Naive thymus-derived CD4-positive, alpha-beta T cell (primary cell): ENCODE measurements at regions of chr14 and their contacts with region 1.

Region 1: DNA sequence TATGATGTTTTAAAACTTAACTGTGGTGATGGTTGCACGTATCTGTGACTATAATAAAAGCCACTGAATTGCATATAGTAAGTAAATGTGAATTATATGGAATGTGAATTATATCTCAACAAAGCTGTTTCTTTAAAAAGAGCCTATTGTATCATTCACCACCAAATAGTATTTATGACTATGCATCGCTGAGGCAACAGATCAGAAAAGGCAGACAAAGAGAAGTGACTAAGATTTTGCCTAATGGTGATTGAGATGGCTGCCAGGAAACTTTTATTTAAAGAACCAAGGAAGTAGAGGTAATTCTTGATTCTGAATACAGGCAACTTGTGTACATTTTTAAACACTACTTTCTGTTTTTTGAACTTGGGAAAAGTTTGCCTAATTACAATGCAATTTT is 31.7 kb downstream of the DHRS7 start:
- DNase-seq: no peak
- ATAC-seq: no peak
- H3K4me3 ChIP-seq: no peak overlapping the region
- H3K4me3 Mint-ChIP-seq: no peak overlapping the region
- H3K27ac ChIP-seq: no peak overlapping the region
- H3K27ac Mint-ChIP-seq: no peak overlapping the region
- H3K4me1 ChIP-seq: no peaks in the 10 kb centered on the region
- H3K4me1 Mint-ChIP-seq: peaks cover 0 to 13% (median 0%) of the 10 kb centered on the region in 7 donors
- H3K27me3 ChIP-seq: no peaks in the 10 kb centered on the region
- H3K27me3 Mint-ChIP-seq: no peaks in the 10 kb centered on the region

Region 2: GRCh38 chr14:59849411-59850130 is 283.9 kb before region 1 on chr14:
- CTCF ChIA-PET with region 1: no interaction called
- POLR2A ChIA-PET with region 1: no interaction called
- intact Hi-C with region 1: no loop called
- DNase-seq: no peak
- ATAC-seq: peak; percentile 52
- H3K4me3 ChIP-seq: no peak overlapping the region
- H3K4me3 Mint-ChIP-seq: no peak overlapping the region
- H3K27ac ChIP-seq: no peak overlapping the region
- H3K27ac Mint-ChIP-seq: no peak overlapping the region
- H3K4me1 ChIP-seq: no peaks in the 10 kb centered on the region
- H3K4me1 Mint-ChIP-seq: peaks cover 0 to 5% (median 2%) of the 10 kb centered on the region in 7 donors
- H3K27me3 ChIP-seq: no peaks in the 10 kb centered on the region
- H3K27me3 Mint-ChIP-seq: peaks cover under 1 to 14% (median 7%) of the 10 kb centered on the region in 5 donors

Region 3: GRCh38 chr14:60116181-60116580 is 17.3 kb before region 1 on chr14:
- CTCF ChIA-PET with region 1: no interaction called
- POLR2A ChIA-PET with region 1: no interaction called
- intact Hi-C with region 1: no loop called
- DNase-seq: no peak
- ATAC-seq: no peak
- H3K4me3 ChIP-seq: no peak overlapping the region
- H3K4me3 Mint-ChIP-seq: no peak overlapping the region
- H3K27ac ChIP-seq: no peak overlapping the region
- H3K27ac Mint-ChIP-seq: no peak overlapping the region
- H3K4me1 ChIP-seq: no peaks in the 10 kb centered on the region
- H3K4me1 Mint-ChIP-seq: peaks cover 0 to 8% (median 3%) of the 10 kb centered on the region in 7 donors
- H3K27me3 ChIP-seq: no peaks in the 10 kb centered on the region
- H3K27me3 Mint-ChIP-seq: no peaks in the 10 kb centered on the region

Region 4: DNA sequence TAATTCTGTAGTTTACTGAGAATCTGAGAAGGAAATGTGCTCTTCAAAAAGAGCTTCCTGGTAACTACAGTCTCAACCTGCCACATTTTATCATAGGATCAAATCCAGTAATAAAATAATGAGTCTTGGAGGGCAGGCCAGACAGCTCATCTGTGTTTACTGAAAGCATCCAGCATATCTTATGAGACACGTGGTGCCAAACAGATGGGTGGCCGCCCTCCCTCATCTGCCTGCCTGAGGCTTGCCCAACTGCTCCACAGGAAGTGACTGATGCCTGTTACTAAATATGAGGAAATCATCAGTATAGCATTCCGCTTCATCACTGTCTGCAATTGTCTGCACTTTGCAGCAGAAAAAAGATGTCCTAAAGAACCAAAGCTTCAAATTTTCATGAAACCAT is 18.2 kb after region 1 on chr14:
- CTCF ChIA-PET with region 1: no interaction called
- POLR2A ChIA-PET with region 1: interaction called, 3 read pairs
- intact Hi-C with region 1: loop called in 1 of 2 experiments (anchors 2 kb)
- DNase-seq: peak; percentile 13 to 69 (median 60)
- ATAC-seq: peak; percentile 98
- H3K4me3 ChIP-seq: no peak overlapping the region
- H3K4me3 Mint-ChIP-seq: peak overlapping the region in 8 of 10 donors; percentile 3 to 43 (median 36)
- H3K27ac ChIP-seq: peak overlapping the region; percentile 52
- H3K27ac Mint-ChIP-seq: peak overlapping the region; percentile 84 to 94 (median 88)
- H3K4me1 ChIP-seq: peaks cover 23% of the 10 kb centered on the region in 2 donors
- H3K4me1 Mint-ChIP-seq: peaks cover 28 to 56% (median 48%) of the 10 kb centered on the region in 7 donors
- H3K27me3 ChIP-seq: no peaks in the 10 kb centered on the region
- H3K27me3 Mint-ChIP-seq: no peaks in the 10 kb centered on the region

Region 5: DNA sequence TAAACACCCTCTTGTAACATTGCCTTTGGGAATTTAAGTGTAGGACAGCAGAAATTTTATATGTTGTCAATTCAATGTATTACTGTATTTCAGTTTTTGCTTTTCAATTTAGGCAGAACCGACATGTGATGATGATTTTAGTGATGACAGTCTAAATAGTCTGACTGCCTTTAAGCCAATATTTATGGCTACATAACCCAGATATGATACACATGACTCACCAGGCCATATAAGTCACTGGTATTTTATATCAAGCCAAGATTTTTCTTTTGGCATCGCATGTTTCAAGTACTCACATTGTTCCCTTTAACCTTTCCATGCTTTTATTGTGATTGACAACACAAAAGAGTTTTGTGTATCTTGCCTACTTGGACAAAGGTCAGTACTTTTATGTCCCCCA is 102.0 kb after region 1 on chr14:
- CTCF ChIA-PET with region 1: no interaction called
- POLR2A ChIA-PET with region 1: no interaction called
- intact Hi-C with region 1: no loop called
- DNase-seq: no peak
- ATAC-seq: no peak
- H3K4me3 ChIP-seq: no peak overlapping the region
- H3K4me3 Mint-ChIP-seq: no peak overlapping the region
- H3K27ac ChIP-seq: no peak overlapping the region
- H3K27ac Mint-ChIP-seq: no peak overlapping the region
- H3K4me1 ChIP-seq: no peaks in the 10 kb centered on the region
- H3K4me1 Mint-ChIP-seq: no peaks in the 10 kb centered on the region
- H3K27me3 ChIP-seq: no peaks in the 10 kb centered on the region
- H3K27me3 Mint-ChIP-seq: peaks cover 0 to 18% (median 4%) of the 10 kb centered on the region in 5 donors